Activated T-helper 1 cell treated with anti-CD3 and anti-CD28 coated beads, Interleukin-12 subunit alpha, Interleukin-12 subunit beta, Interleukin-2, Interleukin-4 antibody, amounts not matched to agents 30 ng/mL and 10 ng/mL and 1 ng/mL, durations not matched to agents 14 hours and 24 hours and 36 hours (primary cell): ENCODE measurements at regions of chr5 and their contacts with region 1.

Region 1: DNA sequence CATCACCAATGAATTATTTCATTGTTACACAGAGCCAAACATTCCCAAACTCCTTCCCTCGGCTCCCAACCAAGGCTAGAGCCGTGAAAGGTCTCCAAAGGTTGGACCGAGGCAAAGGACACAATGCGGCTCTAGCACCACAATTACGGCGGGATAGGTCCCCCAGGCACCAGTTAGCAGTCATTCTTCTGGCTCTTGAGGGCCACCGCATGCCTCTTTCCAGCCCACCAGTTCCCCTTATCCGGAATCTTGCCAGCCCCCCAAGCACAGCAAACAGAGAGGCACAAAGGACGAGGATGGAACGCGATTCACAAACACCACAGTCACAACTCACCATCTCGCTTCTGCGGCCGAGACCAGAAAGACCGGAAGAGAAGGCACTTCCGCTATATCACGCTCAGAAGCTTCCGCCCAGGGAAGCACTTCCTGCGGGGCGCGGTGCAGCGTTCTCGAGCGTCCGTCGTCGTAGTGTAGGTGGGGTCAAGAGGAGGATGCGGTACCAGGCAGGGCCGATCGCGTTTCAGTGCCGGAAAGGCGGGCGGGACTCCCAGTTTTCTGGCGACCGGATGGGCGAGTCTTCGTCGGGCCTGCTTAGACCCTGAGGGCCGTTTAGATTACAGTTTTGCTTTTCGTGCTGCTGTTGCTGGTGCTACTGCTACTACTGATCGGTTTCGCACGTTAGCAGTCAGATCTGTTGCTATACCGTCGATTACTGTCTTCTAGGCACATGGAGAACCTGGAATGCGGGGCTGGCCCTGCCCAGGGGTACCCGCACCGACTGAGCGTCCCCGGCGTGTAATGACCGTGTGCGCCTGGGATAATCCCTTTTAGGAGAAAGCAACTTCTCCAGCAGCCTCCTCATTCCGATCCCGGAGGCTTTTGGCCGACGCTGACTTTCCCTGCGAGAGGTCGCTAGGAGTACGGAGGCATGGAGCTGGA is at the start of gene RPL37:
- DNase-seq: peak; percentile 89
- H3K4me3 Mint-ChIP-seq: peak within 1 kb of the TSS; percentile 95
- H3K27ac Mint-ChIP-seq: peak within 1 kb of the TSS; percentile 90
- H3K4me1 Mint-ChIP-seq: peaks cover 45% of the 10 kb centered on the region
- H3K27me3 Mint-ChIP-seq: no peaks in the 10 kb centered on the region
- total RNA-seq, gene RPL37: 1,451 and 1,473 TPM in 2 replicates

Region 2: GRCh38 chr5:39177631-39177964 is 1657.5 kb before region 1 on chr5:
- intact Hi-C with region 1: loop called (anchors 10 kb)
- DNase-seq: no peak
- H3K4me3 Mint-ChIP-seq: peak overlapping the region; percentile 78
- H3K27ac Mint-ChIP-seq: peak overlapping the region; percentile 77
- H3K4me1 Mint-ChIP-seq: peaks cover 89% of the 10 kb centered on the region
- H3K27me3 Mint-ChIP-seq: no peaks in the 10 kb centered on the region

Region 3: DNA sequence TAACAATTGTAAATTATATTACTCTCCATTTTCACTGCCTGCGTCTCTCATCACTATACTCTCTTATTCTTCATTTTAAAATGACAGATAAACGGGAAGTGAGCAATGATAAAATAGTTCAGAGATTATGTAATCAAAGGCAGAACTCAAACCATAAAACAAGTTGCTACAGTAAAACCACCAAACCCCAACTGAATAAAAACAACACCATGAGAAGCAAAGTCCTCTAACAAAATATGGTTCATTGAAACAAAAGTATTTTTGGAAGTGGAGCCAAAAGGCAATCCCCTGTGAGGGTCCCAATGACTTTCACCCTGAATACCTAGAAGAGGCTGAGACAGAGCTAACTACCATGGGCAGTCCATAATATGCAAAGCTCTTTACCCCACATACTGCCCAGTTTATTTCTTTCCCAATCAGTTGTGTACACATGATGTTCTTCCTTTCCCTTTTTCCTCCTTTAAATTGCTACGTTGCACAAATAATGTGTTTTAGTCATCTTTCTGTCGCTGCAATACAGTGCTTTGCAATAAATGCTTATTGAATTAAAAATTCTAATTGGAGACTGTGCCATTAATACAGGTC is 219.4 kb before region 1 on chr5:
- intact Hi-C with region 1: no loop called
- DNase-seq: no peak
- H3K4me3 Mint-ChIP-seq: no peak overlapping the region
- H3K27ac Mint-ChIP-seq: no peak overlapping the region
- H3K4me1 Mint-ChIP-seq: peaks cover 25% of the 10 kb centered on the region
- H3K27me3 Mint-ChIP-seq: no peaks in the 10 kb centered on the region

Region 4: GRCh38 chr5:40679155-40679913 is 155.8 kb before region 1 on chr5:
- intact Hi-C with region 1: loop called (anchors 2 kb)
- DNase-seq: peak; percentile 91
- H3K4me3 Mint-ChIP-seq: peak overlapping the region; percentile 99
- H3K27ac Mint-ChIP-seq: peak overlapping the region; percentile 99
- H3K4me1 Mint-ChIP-seq: peaks cover 66% of the 10 kb centered on the region
- H3K27me3 Mint-ChIP-seq: no peaks in the 10 kb centered on the region

Region 5: DNA sequence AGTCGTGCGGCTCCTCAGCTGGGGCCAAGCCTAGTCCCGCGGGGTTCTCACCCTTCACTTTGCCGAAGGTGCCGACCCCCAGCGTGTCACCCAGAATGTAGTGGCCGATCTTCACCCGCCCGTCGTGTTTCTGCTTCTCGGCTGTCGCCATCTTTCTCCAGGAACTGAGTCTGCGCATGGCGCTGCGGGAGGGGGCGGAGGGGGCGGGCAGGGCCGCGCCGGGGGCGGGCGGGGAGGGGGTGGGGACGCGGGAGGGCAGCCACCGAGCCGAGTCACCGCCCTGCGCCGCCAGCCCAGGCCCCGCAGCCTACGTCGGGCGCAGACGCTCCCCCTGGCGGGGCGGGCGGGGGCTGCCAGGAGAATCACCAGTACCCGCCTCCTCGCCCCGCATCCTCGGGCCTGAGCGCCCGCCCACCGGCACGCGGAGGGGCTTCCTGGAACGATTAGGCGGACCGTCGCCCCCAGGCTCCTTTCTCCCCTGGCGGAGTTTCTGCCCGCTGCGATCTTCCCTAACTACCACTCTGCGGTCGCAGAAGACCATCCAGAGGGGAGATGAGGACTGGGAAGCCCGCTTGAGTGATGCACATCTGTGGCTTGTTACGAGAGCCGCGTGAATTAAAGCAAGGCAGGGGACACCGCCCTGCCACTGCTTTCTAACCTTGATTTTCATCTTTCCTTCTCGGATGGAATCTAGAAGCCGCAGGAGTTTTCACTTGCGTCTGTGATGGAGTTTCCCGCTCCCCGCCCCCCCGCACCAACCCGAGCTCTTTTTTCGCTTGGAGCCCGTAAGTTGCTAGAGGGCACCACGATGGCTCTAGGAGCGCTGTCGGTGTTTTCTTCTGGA is 36.9 kb before region 1 on chr5 and contains the start of gene PRKAA1:
- intact Hi-C with region 1: loop called (anchors 1 kb)
- DNase-seq: peak; percentile 87
- H3K4me3 Mint-ChIP-seq: peak within 1 kb of the TSS; percentile 91
- H3K27ac Mint-ChIP-seq: peak within 1 kb of the TSS; percentile 96
- H3K4me1 Mint-ChIP-seq: peaks cover 41% of the 10 kb centered on the region
- H3K27me3 Mint-ChIP-seq: no peaks in the 10 kb centered on the region
- total RNA-seq, gene PRKAA1: 56.6 and 59.0 TPM in 2 replicates

Region 6: DNA sequence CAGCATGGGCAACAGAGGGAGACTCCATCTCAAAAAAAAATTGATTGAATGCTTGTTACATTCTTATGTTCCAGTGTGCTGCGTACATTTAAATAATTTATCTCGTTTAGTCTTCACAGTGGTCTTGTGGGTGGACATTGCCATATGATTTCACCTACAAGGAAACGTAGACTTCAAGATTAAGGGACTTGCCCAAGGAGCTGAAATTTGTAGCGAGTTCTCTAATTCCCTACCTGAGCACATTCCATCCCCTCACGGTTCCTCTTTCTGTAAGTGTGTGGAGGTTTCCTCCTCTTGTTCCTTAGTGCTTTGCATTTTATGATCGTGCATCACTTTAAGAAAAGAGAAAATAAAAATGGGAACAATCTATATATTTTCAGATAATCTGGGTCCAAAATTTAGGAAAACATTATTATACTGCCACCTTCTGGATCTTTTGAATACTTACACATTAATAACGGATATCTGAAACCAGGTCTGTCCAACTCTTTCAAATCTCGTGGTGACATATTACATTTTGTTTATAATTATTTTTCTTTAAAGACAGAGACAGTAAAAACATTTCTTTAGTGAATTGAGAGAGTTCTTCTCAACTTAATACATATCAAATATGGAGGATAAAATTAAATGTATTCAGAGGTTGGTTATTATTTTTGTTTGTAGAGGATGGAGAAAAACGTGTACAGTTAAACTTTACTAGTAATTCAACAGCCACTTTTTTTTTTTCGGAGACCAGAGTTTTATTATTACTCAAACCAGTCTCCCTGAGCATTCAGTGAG is 44.2 kb after region 1 on chr5:
- intact Hi-C with region 1: loop called (anchors 2 kb)
- DNase-seq: no peak
- H3K4me3 Mint-ChIP-seq: no peak overlapping the region
- H3K27ac Mint-ChIP-seq: no peak overlapping the region
- H3K4me1 Mint-ChIP-seq: peaks cover 5% of the 10 kb centered on the region
- H3K27me3 Mint-ChIP-seq: peaks cover 10% of the 10 kb centered on the region

Region 7: GRCh38 chr5:41903892-41904799 is 1069.0 kb after region 1 on chr5 and contains the start of gene RIMOC1:
- intact Hi-C with region 1: loop called (anchors 10 kb)
- DNase-seq: peak; percentile 98
- H3K4me3 Mint-ChIP-seq: peak within 1 kb of the TSS; percentile 99
- H3K27ac Mint-ChIP-seq: peak within 1 kb of the TSS; percentile 100
- H3K4me1 Mint-ChIP-seq: peaks cover 54% of the 10 kb centered on the region
- H3K27me3 Mint-ChIP-seq: peaks cover 10% of the 10 kb centered on the region
- total RNA-seq, gene RIMOC1: 28.0 and 29.0 TPM in 2 replicates